RWPE1 (cell line): ENCODE measurements at regions of chr16 and their contacts with region 1.

Region 1: GRCh38 chr16:85615852-85616606 is 2.9 kb downstream of the GSE1 start:
- DNase-seq: peak; percentile 54
- H3K27ac ChIP-seq: peak overlapping the region; percentile 98
- CTCF ChIP-seq: peak; percentile 81

Region 2: DNA sequence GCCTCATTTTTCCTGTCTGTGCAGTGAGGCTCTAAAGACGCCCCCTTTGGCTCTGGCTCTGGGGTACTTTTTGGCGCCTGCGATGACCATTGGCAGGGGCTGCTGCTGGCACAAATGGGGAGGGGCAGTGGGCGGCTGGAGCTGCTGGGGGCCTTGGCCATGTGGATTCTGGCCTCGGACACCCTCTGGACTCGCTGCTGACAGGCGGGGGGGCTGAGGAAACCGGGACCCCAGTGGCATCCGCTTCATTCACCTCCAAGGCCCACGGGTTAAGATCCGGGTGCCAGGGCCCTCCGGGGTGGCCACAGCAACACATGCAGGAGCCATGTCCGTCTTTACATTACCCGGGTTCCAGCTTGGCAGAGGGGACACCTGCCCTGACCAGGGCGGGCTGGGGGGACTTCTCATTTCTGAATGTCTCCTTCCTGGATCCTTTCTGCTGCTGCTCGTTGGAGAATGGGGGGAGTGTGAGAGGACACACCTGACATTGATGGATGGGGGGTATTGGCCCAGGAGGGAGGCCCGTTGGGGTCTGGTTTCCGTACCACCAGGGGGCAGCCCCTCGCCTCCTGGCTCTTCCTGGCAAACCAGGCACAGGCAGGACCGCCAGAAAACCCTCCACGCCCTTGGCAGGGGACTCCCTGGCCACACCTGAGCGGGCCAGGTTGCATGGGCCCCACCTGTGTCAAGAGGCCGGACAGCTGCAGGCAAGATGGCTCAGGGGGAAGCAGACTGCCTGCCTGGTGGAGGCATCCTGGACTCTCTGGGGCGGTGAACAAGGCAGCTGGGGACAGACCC is 18.9 kb after region 1 on chr16:
- CTCF ChIA-PET with region 1: interaction called, 17 read pairs
- POLR2A ChIA-PET with region 1: interaction called, 3 read pairs
- DNase-seq: no peak
- H3K27ac ChIP-seq: peak overlapping the region; percentile 88
- CTCF ChIP-seq: 0 out of 2 replicates have a peak, but pooled peaks have one; percentile 13

Region 3: DNA sequence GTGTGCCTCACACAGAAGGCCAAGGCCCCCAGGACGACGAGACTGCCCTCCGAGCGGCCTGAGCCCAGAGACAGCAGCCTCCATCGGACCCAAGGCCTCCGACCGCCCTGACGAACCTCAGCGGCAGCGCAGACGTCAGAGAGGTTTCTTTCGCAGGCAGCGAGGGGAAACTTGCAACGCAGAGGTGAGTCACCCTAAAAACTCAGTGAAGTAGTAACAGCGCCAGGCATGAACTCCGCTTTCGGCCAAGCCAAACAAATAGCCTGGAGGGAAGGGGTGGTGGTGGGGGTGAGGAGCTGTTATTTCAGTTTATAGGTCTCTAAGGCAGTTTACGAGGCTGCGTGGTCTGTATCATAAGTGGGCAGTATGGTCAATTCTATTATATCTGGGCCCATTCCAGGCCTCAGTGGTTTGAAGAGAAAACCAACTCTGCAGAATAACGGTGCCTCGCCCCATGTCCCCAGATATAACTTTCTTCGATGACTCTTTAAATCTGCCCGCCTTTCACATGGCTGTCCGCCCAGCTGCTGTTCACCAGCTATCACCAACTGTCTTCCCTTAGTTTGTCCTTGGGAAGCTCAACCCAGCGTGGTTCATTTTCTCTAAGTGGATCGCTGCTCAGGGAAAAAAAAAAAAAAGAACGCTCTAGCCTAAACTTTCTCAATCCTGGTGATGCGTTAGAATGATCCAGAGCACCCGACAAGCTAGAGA is 850.8 kb after region 1 on chr16:
- CTCF ChIA-PET with region 1: no interaction called
- POLR2A ChIA-PET with region 1: no interaction called
- DNase-seq: no peak
- H3K27ac ChIP-seq: no peak overlapping the region
- CTCF ChIP-seq: no peak